HEK293 (cell line): ENCODE measurements at regions of chr1 and their contacts with region 1.

Region 1: DNA sequence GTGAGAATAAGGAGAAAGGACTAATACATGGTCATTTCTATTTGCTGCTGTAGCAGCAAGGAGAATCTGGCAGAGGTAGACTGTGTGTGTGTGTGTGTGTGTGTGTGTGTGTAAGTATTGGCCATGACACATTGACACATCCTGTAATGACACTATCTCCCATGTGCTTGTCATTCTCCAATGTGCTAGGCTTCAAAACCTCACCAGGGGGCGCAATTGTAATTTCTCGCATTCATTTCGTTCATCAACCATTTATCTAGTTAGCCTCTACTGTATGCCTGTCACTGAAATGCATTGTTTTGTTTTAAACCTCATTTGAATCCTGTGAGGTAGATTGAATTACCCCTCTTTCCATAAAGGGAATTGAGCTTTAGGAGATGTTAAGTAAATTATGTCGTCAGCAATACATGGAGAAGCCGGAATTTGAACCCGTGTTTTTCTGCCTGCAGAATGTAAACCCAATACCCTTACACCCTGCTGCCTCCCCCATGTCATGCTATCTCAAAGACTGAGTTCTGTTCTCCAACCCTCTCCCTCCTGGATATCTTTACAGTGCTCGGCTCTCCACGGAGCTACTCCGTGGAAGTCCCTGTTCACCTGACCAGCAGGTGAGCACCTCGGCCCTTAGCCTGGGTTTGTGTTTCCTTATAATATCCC is 100.8 kb downstream of the UCK2 start:
- H3K4me3 ChIP-seq: no peak overlapping the region
- H3K27ac ChIP-seq: no peak overlapping the region
- H3K4me1 ChIP-seq: no peaks in the 10 kb centered on the region
- CTCF ChIP-seq: peak; percentile 53

Region 2: GRCh38 chr1:166432655-166433054 is 504.5 kb after region 1 on chr1:
- CTCF ChIA-PET with region 1: interaction called, 15 read pairs
- POLR2A ChIA-PET with region 1: no interaction called
- H3K4me3 ChIP-seq: no peak overlapping the region
- H3K27ac ChIP-seq: no peak overlapping the region
- H3K4me1 ChIP-seq: no peaks in the 10 kb centered on the region
- CTCF ChIP-seq: no peak